Activated CD4-positive, alpha-beta T cell treated with anti-CD3 and anti-CD28 coated beads, Interleukin-2, amount 10 ng/mL, durations not matched to agents 24 days and 14 days (primary cell): ENCODE measurements at regions of chr3 and their contacts with region 1.

Region 1: DNA sequence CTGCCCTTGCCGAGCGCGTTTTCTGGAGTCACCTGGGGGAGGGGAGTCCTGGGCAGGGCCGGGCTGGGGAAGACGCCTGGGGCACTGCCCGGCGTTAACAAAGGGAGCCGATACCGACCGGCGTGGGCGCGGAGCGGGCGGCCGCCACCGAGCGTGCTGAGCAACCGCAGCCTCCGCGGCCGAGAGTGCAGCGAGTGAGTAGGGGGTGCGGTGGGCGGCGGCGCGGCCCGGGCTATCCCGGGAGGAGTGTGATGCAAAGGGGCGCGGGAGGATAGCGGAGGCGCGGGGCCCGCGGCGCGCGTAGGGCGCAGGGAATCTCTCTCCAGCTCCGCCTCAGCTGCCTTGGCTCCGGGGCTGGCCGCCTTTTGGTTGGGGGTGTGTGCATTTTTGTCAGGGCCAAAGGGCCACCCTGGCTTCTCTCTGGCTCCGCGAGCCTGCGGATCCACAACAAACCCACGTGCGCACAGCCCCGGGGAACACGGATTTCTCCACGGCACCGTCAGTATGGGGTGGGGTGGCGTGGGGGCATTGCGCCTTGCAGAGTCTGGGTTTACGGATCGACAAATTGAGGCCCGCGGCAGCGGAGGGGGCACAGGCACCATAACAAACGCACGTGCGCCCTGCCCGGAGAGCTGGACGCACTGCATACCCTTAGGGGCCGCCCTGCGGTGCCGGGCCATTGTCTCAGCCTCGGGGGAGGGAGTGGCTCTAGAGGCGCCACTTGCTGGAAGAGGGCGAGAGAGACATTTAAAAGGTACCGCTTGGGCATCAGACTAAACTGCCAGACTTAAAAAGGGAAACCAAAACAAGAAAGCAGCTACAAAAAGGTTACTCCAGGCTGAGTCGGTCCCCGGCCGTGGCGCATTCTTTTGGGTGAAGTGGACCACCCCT is 560 bp downstream of the ST6GAL1 start:
- DNase-seq: peak; percentile 90
- H3K4me3 Mint-ChIP-seq: peak overlapping the region; percentile 99
- H3K27ac Mint-ChIP-seq: peak overlapping the region; percentile 98
- H3K4me1 Mint-ChIP-seq: peaks cover 42% of the 10 kb centered on the region
- H3K27me3 Mint-ChIP-seq: no peaks in the 10 kb centered on the region

Region 2: DNA sequence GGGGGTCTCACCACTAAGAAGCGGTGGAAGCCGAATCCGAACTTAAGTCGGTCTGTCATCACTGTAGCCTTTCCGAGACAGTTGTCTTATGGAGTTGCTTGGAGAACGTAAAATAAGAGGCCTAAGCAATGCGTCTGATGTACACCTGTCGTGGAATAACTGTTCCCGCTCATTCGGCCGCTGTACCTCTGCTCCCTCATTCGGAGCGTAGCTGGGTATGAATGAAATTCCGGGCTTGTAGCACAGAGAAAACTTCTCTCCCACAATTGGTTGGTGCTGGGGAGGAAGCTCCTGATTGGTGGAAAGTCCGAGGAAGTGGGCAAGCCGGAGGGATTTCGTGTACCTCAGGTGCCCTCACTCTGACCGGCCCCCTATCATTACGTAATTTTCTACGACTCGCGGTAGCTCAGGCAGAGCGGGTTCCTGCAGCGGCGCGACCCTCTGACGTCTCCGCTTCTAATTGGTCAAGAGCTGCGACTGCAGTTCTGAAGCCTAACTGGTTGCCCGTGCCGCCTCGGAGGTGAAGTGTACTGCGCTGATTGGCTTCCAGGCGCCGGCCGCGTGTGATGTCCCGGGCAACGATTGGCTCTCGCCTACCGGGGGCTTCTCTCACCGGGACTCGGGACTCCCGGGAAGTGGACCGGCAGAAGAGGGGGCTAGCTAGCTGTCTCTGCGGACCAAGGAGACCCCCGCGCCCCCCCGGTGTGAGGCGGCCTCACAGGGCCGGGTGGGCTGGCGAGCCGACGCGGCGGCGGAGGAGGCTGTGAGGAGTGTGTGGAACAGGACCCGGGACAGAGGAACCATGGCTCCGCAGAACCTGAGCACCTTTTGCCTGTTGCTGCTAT is 360.6 kb before region 1 on chr3 and contains the start of gene DNAJB11:
- intact Hi-C with region 1: loop called (anchors 5 kb)
- DNase-seq: peak; percentile 99
- H3K4me3 Mint-ChIP-seq: peak within 1 kb of the TSS; percentile 90
- H3K27ac Mint-ChIP-seq: peak within 1 kb of the TSS; percentile 99
- H3K4me1 Mint-ChIP-seq: peaks cover 47% of the 10 kb centered on the region
- H3K27me3 Mint-ChIP-seq: no peaks in the 10 kb centered on the region
- total RNA-seq, gene DNAJB11: 74.0 and 77.7 TPM in 2 replicates

Region 3: DNA sequence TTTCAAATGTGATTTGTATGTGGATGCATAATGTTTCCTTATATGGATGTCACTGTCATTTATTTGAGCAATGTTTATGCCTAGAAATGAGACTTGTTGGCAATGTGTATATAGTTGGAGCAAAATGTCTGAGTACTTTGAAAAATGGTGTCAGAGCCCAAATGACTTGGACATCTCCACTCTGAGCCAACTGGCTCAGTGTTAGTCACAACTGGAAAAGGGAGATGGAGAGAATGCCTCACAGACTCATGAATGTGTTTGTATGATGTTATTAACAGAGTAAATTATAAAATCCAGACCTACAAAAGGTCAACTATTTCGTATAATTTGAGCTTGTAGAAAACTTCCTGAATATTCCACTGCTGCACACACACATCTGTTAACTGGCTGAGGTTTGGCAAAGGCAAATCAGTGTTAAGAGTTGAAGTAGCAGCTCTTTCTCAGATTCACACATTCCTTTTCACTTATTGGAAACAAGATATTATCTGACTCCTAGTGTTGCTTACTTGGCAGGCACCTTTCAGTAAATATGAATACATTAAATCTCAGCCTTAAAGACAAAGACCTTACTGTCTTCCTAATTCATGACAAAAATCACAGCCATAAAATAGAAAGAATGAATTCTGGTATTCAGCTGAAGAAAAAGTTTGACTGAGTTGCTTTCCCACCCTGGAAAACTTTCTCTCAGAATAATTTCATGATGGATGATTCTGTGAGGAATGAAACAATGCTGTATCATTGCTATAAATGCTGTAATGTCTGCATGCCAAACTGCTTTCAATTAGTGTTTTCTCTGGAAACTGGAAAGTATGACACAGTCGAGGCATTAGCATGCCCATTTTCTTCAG is 61.4 kb before region 1 on chr3:
- intact Hi-C with region 1: loop called (anchors 5 kb)
- DNase-seq: peak; percentile 26
- H3K4me3 Mint-ChIP-seq: no peak overlapping the region
- H3K27ac Mint-ChIP-seq: peak overlapping the region; percentile 34
- H3K4me1 Mint-ChIP-seq: peaks cover 30% of the 10 kb centered on the region
- H3K27me3 Mint-ChIP-seq: no peaks in the 10 kb centered on the region

Region 4: GRCh38 chr3:186953011-186953487 is 22.2 kb after region 1 on chr3:
- intact Hi-C with region 1: loop called (anchors 1 kb)
- DNase-seq: peak; percentile 74
- H3K4me3 Mint-ChIP-seq: peak overlapping the region; percentile 63
- H3K27ac Mint-ChIP-seq: peak overlapping the region; percentile 85
- H3K4me1 Mint-ChIP-seq: peaks cover 64% of the 10 kb centered on the region
- H3K27me3 Mint-ChIP-seq: no peaks in the 10 kb centered on the region

Region 5: DNA sequence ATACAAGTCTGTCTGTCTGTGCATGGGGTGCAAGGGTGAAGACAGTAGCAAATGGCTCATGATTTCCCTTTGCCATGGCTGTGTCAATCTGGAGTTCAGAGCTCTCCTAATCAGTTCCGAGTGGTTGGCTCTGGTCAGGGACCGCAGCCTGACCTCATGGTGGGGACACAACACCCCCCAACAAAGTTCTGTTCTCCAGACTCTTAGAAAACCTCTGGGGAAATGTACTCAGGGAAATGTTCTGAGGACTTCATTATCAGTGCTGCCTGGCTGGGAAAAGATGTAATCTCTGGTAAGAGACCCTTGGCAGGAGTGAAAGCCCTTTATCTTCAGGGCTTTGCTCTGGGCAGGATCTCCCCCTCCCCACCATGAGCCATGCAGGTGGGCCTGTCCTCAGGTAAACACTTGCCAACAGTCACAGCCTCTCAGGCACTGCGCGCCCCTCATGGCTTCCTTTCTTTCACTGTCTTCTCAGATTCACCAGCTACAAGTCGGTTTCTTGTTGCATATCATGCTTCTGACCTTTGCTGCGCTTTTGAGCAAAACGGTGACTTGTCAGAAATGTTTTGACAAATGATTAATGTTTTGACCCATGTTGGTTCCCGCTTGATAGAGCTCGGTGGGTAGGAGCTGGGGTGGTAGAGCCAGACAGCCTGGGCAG is 94.9 kb after region 1 on chr3:
- intact Hi-C with region 1: loop called (anchors 1 kb)
- DNase-seq: peak; percentile 82
- H3K4me3 Mint-ChIP-seq: peak overlapping the region; percentile 83
- H3K27ac Mint-ChIP-seq: peak overlapping the region; percentile 98
- H3K4me1 Mint-ChIP-seq: peaks cover 52% of the 10 kb centered on the region
- H3K27me3 Mint-ChIP-seq: no peaks in the 10 kb centered on the region

Region 6: GRCh38 chr3:187139126-187139894 is 208.4 kb after region 1 on chr3 and contains the start of gene RPL39L:
- intact Hi-C with region 1: loop called (anchors 2 kb)
- DNase-seq: peak; percentile 98
- H3K4me3 Mint-ChIP-seq: peak within 1 kb of the TSS; percentile 93
- H3K27ac Mint-ChIP-seq: peak within 1 kb of the TSS; percentile 98
- H3K4me1 Mint-ChIP-seq: peaks cover 27% of the 10 kb centered on the region
- H3K27me3 Mint-ChIP-seq: no peaks in the 10 kb centered on the region
- total RNA-seq, gene RPL39L: 10.4 and 11.7 TPM in 2 replicates